ENCODE measurements at regions of chrX and their contacts with region 1.

Region 1: GRCh38 chrX:30635630-30636029 is 17.6 kb upstream of the GK start:
- DNase-seq: no peak
- H3K4me3 ChIP-seq: no peak overlapping the region
- H3K27ac ChIP-seq: no peak overlapping the region
- H3K4me1 ChIP-seq: no peaks in the 10 kb centered on the region
- H3K27me3 ChIP-seq: no peaks in the 10 kb centered on the region
- CTCF ChIP-seq: no peak; a peak in 1 of 4 replicates
- EP300 ChIP-seq: no peak
- POLR2A ChIP-seq: no peak
- RAD21 ChIP-seq: peak; percentile 53 to 56

Region 2: DNA sequence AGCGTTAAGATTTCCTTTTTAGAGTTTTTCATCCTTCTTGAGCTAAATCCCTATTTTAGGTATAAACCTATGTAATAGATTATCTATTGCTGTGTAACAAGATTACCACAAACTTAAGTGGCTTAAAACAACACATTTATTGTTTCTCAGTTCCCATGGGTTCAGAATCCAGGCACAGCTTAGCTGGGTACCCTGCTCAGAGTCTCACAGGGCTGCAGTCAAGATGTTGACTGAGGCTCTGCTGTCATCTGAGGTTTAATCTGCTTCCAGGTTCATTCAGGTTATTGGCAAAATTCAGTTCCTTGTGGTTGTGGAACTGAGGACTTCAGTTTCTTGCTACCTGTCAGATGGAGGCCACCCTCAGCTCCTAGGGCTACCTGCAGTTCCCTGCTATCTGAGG is 78.5 kb after region 1 on chrX:
- CTCF ChIA-PET with region 1: interaction called, 13 read pairs
- POLR2A ChIA-PET with region 1: no interaction called
- DNase-seq: no peak
- H3K4me3 ChIP-seq: no peak overlapping the region
- H3K27ac ChIP-seq: no peak overlapping the region
- H3K4me1 ChIP-seq: no peaks in the 10 kb centered on the region
- H3K27me3 ChIP-seq: no peaks in the 10 kb centered on the region
- CTCF ChIP-seq: no peak
- EP300 ChIP-seq: no peak
- POLR2A ChIP-seq: no peak
- RAD21 ChIP-seq: no peak

Region 3: DNA sequence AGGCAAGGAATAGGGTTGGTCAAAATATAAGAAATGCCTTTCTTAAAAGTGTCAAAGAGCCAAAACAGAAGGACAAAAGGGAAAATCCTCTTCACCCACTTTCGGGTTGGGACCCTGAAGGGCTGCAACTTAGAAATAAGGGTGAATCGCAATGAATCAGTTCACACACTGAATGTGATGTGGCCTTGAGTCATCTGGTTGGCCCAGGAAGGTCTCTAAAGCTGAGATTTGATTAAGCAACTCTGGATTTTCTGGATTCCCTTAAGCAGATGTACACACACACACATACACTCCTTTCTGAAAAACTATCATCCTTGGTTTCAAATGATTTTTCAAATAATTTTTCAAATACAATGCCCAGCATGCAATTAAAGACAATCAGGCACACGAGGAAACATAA is 240.3 kb after region 1 on chrX:
- CTCF ChIA-PET with region 1: no interaction called
- POLR2A ChIA-PET with region 1: no interaction called
- DNase-seq: no peak
- H3K4me3 ChIP-seq: no peak overlapping the region
- H3K27ac ChIP-seq: no peak overlapping the region
- H3K4me1 ChIP-seq: no peaks in the 10 kb centered on the region
- H3K27me3 ChIP-seq: no peaks in the 10 kb centered on the region
- CTCF ChIP-seq: no peak
- EP300 ChIP-seq: no peak
- POLR2A ChIP-seq: no peak
- RAD21 ChIP-seq: no peak

Measured in H1 (cell line).